RWPE1 (cell line): ENCODE measurements at regions of chr1 and their contacts with region 1.

Region 1: DNA sequence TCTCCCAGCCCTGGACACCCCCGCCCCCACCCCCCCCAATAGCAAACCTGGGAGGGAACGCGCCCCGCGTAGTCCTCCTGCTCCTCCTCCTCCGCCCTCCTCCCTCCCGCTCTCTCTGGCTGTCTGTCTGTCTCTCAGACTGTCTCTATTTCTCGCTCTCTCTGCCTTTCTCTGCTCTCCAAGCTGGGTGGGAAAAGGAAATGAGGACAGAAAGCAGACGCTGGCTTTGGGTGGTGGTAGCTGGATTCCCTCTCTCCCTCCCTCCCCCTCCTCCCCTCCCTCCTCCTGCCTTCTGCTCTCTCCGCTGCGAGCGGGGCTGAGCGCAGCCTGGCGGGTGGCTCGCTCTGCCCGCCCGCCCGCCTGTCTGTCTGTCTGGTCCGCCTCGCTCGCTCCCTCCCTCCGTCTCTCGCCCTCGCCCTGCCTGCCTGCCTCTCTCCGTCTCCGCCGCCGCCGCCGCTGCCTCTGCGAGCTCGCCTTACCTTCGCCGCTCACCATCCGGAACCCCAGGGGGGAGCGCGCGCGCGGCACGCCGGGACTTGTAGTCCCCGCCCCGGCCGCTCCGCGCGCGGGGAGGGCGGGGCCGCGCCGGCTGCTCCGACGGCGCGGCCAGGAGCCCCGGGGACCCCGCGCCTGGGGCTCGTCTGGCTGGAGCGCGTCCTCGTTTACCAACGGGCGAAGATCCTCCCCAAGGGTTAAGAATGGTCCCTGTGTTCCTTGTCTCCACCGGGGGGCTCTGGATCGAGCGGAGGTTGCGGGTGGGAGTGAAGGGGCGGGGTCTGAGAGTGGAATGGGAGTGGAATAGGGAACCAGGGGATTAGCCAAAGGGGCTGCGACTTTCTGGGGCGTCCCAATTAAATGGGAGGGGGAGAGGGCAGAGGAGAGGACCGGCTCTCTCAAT is at the start of gene AHDC1:
- DNase-seq: peak; percentile 91
- H3K27ac ChIP-seq: peak within 1 kb of the TSS; percentile 93
- CTCF ChIP-seq: no peak

Region 2: DNA sequence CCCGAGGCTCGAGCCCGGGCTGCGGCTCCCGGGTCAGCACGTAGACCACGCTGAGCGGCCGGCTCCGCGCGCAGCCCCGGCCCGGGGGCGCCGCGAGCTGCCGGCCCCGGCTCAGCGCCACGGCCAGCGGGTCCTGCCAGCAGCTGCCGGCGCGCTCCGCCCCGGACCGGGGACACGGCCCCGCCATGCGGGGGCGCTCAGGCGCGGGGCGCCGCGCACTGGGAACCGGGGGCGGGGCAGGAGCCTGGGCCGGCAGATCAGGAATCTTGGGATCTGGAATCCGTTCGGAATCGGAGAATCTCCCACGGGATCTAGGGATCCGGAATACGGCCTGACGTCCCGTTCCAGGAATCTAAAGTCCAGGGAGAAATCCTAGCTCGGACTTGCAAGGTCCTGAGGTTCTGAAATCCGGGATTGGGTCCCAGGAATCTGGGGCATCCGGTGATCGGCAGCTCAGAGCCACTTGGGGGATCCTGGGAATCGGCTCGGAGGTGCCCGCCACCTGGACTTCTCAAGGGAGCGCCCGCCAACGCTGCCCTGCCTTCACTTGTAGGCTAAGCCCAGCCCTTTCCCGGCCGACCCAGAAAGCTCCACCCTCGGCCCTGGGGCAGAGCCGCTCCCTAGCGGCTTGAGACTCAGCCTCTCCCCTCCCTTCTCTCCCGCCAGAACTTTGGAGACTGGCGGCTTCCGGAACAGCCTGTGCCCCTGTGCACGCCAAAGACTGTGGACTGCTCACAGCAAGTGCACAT is 237.3 kb before region 1 on chr1 and contains the start of gene MAP3K6:
- CTCF ChIA-PET with region 1: no interaction called
- POLR2A ChIA-PET with region 1: no interaction called
- DNase-seq: peak; percentile 88
- H3K27ac ChIP-seq: peak within 1 kb of the TSS; percentile 100
- CTCF ChIP-seq: peak; percentile 75

Region 3: GRCh38 chr1:27650539-27651175 is 46.7 kb after region 1 on chr1:
- CTCF ChIA-PET with region 1: no interaction called
- POLR2A ChIA-PET with region 1: no interaction called
- DNase-seq: no peak
- H3K27ac ChIP-seq: peak overlapping the region; percentile 30; the same call in 1 of the 2 replicates
- CTCF ChIP-seq: no peak

Region 4: GRCh38 chr1:27662707-27663393 is 58.9 kb after region 1 on chr1:
- CTCF ChIA-PET with region 1: interaction called, 51 read pairs
- POLR2A ChIA-PET with region 1: no interaction called
- DNase-seq: peak; percentile 77
- H3K27ac ChIP-seq: peak overlapping the region; percentile 48
- CTCF ChIP-seq: peak; percentile 91

Region 5: DNA sequence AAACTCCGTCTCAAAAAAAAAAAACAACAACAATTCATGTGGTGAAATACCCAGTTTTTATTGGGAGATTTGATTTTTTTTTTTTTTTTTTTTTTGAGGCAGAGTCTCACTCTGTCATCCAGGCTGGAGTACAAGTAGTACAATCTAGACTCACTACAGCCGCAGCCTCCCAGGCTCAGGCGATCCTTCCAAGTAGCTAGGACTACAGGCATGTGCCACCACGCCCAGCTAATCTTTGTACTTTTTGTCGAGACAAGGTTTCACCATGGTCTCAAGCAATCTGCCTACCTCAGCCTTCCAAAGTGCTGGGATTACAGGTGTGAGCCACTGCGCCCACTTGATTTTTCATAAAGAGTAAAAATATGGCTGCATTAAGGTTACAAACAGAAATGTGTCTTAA is 137.2 kb after region 1 on chr1:
- CTCF ChIA-PET with region 1: no interaction called
- POLR2A ChIA-PET with region 1: no interaction called
- DNase-seq: no peak
- H3K27ac ChIP-seq: no peak overlapping the region
- CTCF ChIP-seq: no peak

Region 6: DNA sequence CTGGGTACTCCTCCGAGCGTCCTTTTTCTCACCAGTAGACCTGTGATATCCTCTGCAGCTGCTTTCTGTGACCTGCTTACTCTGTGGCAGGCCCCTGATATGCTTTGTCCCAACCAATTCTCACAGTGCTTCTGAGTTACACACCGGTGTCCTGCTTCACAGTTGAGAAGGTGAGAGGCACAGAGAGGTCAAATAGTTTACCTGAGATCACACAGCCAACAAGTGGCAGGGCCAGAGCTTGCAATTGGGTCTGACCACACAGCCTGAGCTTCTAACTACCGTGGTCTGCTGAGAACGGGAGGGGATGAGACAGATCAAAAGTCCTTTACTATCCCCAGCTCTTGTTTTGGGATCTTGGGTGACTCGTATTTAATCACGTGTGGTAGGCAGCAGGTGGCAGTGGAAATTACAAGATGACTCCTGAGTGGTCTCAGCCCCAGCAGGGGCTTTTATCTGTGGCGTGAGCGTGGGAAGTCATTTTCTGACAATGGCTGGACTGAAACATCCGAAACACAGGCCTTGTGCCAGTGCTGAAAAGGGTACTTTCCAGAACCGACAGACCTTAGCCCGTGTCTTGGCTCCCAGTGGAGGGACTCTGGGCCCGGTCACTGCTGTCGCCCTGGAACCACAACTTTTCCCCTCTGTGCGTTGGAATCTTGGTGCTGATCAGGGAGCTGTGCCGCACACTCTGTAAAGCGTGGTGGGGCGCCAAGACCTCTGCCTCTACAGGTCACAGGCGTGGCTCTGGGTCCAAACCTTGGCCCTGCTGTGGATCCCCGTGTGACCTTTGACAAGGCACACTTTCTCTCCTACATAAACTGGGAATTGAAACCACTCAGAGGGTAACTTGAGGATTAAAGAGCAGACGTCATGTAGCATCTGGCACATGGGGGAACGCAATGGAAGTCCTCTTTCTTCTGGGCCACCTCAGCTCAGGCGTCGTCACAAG is 280.4 kb after region 1 on chr1:
- CTCF ChIA-PET with region 1: no interaction called
- POLR2A ChIA-PET with region 1: no interaction called
- DNase-seq: no peak
- H3K27ac ChIP-seq: peak overlapping the region; percentile 7
- CTCF ChIP-seq: no peak